Activated CD4-positive, alpha-beta T cell treated with anti-CD3 and anti-CD28 coated beads for 36 hours (primary cell): ENCODE measurements at regions of chr6 and their contacts with region 1.

Region 1: GRCh38 chr6:169831450-169832246 is 80.2 kb downstream of the ERMARD start:
- DNase-seq: peak; percentile 85
- ATAC-seq: peak; percentile 71
- H3K4me3 Mint-ChIP-seq: no peak overlapping the region
- H3K27ac Mint-ChIP-seq: no peak overlapping the region
- H3K4me1 Mint-ChIP-seq: no peaks in the 10 kb centered on the region
- H3K27me3 Mint-ChIP-seq: peaks cover 35% of the 10 kb centered on the region

Region 2: GRCh38 chr6:169780571-169781091 is 51.0 kb before region 1 on chr6:
- CTCF ChIA-PET with region 1: no interaction called
- POLR2A ChIA-PET with region 1: no interaction called
- intact Hi-C with region 1: no loop called
- DNase-seq: no peak
- ATAC-seq: no peak
- H3K4me3 Mint-ChIP-seq: no peak overlapping the region
- H3K27ac Mint-ChIP-seq: no peak overlapping the region
- H3K4me1 Mint-ChIP-seq: no peaks in the 10 kb centered on the region
- H3K27me3 Mint-ChIP-seq: no peaks in the 10 kb centered on the region

Region 3: DNA sequence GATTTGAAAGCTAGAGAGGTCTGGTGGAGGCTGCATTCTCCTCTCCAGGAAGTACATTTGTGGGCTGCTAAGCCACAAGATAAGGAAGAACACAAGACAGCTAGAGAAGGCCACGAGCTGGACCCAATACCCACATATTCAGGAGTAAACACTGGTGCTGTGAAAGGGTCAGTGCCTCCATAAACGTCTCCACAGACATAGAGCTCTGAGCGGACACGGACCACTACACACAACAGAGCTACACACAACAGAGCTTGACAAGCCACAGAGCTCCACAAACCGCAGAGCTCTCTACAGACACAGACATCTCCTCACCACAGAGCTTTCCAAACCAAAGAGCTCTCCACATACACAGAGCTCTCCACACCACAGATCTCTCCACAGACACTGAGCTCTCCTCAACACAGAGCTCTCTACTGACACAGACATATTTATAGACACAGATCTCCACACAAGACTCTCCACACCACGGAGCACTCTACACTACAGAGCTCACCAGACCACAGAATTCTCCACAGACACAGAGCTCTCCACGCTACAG is 28.3 kb before region 1 on chr6:
- CTCF ChIA-PET with region 1: interaction called, 15 read pairs
- POLR2A ChIA-PET with region 1: no interaction called
- intact Hi-C with region 1: no loop called
- DNase-seq: no peak
- ATAC-seq: peak; percentile 24
- H3K4me3 Mint-ChIP-seq: no peak overlapping the region
- H3K27ac Mint-ChIP-seq: no peak overlapping the region
- H3K4me1 Mint-ChIP-seq: peaks cover 47% of the 10 kb centered on the region
- H3K27me3 Mint-ChIP-seq: peaks cover 37% of the 10 kb centered on the region

Region 4: DNA sequence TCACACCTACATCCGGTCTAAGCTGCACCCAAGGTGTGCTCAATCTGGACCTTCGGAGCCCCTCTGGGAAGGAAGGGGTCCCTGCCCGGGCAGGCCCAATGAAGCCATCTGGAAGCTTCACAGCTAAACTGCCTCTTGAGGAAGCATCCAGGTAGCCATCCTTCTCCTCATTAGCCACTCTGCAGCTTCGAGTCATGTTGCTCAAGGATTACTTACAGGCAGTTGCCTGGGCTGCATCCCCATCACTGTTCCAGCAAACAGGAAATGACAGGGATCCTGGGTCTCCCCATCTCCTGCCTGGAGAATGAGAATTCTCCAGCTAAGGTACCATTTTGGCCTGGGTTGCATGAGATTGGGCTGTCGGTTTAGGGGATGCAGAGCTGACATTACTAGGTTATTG is 11.5 kb after region 1 on chr6:
- CTCF ChIA-PET with region 1: interaction called, 10 read pairs
- POLR2A ChIA-PET with region 1: no interaction called
- intact Hi-C with region 1: no loop called
- DNase-seq: no peak
- ATAC-seq: no peak
- H3K4me3 Mint-ChIP-seq: no peak overlapping the region
- H3K27ac Mint-ChIP-seq: no peak overlapping the region
- H3K4me1 Mint-ChIP-seq: no peaks in the 10 kb centered on the region
- H3K27me3 Mint-ChIP-seq: no peaks in the 10 kb centered on the region

Region 5: GRCh38 chr6:169950558-169950957 is 118.9 kb after region 1 on chr6:
- CTCF ChIA-PET with region 1: interaction called, 10 read pairs
- POLR2A ChIA-PET with region 1: no interaction called
- intact Hi-C with region 1: no loop called
- DNase-seq: peak; percentile 62
- ATAC-seq: peak; percentile 63
- H3K4me3 Mint-ChIP-seq: no peak overlapping the region
- H3K27ac Mint-ChIP-seq: no peak overlapping the region
- H3K4me1 Mint-ChIP-seq: no peaks in the 10 kb centered on the region
- H3K27me3 Mint-ChIP-seq: no peaks in the 10 kb centered on the region

Region 6: GRCh38 chr6:170295510-170296422 is 464.1 kb after region 1 on chr6:
- CTCF ChIA-PET with region 1: interaction called, 5 read pairs
- POLR2A ChIA-PET with region 1: no interaction called
- intact Hi-C with region 1: loop called (anchors 1 to 5 kb)
- DNase-seq: peak; percentile 80
- ATAC-seq: peak; percentile 67
- H3K4me3 Mint-ChIP-seq: peak overlapping the region; percentile 52
- H3K27ac Mint-ChIP-seq: no peak overlapping the region
- H3K4me1 Mint-ChIP-seq: peaks cover 29% of the 10 kb centered on the region
- H3K27me3 Mint-ChIP-seq: peaks cover 61% of the 10 kb centered on the region

Region 7: GRCh38 chr6:170529839-170530469 is 698.3 kb after region 1 on chr6:
- CTCF ChIA-PET with region 1: interaction called, 24 read pairs
- POLR2A ChIA-PET with region 1: no interaction called
- intact Hi-C with region 1: loop called in 1 of 2 experiments (anchors 1 kb)
- DNase-seq: peak; percentile 83
- ATAC-seq: peak; percentile 76
- H3K4me3 Mint-ChIP-seq: no peak overlapping the region
- H3K27ac Mint-ChIP-seq: no peak overlapping the region
- H3K4me1 Mint-ChIP-seq: no peaks in the 10 kb centered on the region
- H3K27me3 Mint-ChIP-seq: no peaks in the 10 kb centered on the region